ENCODE measurements at regions of chr1 and their contacts with region 1.

Region 1: DNA sequence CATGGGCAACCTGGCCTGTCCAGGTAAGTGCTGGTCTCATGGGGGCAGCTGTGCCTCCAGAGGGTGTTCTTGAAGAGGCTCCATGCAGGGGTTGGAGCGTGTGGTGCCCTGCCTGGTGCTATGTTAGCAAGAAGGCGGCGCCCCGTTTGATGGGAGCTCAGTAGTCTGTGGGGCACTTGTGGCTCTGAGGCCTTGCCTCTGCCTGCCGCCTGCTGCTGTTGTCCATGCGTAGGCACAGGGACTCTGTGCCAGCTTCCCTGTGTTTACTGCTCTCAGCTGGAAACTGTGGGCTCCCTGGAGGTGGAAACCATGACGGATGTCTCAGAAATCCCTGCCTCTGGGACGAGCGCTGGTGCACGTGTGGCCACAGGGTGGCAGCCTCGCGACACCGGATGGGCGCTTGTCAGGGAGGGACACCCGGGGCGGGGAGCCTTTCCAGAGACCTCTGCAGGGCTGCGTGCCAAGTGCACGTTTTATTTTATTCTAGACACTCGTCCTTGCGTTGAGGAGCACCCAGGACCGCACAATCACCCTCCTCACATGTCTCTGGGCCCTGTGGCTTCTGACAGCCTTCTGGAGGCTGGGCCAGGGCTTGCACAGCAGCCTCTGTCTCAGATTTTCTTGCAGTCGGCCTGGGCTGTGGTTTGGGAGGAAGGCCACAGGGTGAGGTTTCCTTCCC is 27.1 kb downstream of the SNAP47 start:
- DNase-seq: no peak
- H3K4me3 ChIP-seq: no peak overlapping the region
- CTCF ChIP-seq: peak; percentile 95

Region 2: GRCh38 chr1:227728059-227728891 is 34.1 kb before region 1 on chr1:
- CTCF ChIA-PET with region 1: interaction called, 27 read pairs
- POLR2A ChIA-PET with region 1: no interaction called
- DNase-seq: no peak
- H3K4me3 ChIP-seq: peak overlapping the region; percentile 58
- CTCF ChIP-seq: no peak

Region 3: GRCh38 chr1:227778401-227778947 is 16.1 kb after region 1 on chr1:
- CTCF ChIA-PET with region 1: interaction called, 70 read pairs
- POLR2A ChIA-PET with region 1: interaction called, 14 read pairs
- DNase-seq: no peak
- H3K4me3 ChIP-seq: no peak overlapping the region
- CTCF ChIP-seq: no peak

Region 4: DNA sequence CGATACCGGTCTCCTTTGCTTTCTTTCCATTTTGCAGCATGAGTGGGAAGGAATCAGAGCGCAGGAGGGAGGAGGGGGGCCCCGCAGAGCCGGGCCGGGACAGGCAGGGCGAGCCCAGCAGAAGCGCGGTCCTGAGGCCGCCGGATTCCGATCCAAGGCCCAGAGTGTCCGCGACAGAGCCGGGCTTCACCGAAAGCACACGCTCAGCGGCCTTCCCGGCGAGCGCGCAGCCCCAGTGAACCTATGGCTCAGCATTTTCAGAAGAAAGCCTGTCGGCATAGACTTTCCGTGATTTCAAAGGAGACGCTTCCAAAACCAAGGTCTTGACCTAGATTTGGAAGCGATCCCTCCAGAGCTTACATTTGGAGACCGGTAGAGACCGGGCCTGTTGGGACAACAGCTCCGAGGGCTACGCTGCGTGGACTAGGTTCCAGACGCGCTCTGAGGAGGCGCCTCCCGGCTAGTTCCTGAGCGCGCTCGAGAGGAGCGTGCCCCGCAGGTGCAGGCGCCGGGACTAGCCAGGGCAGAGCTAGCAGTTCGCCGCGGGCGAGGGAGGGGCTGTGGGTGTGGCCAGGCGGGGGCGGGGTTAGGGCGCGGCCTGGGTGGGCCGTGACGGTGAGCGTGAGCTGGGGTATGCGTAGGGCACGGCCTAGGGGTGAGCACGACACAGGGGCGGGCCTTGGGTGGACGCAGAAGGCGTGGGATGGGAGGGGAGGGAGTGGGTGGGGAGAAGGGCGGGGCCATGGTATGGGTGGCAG is 25.3 kb after region 1 on chr1:
- CTCF ChIA-PET with region 1: interaction called, 15 read pairs
- POLR2A ChIA-PET with region 1: interaction called, 9 read pairs
- DNase-seq: no peak
- H3K4me3 ChIP-seq: peak overlapping the region; percentile 80
- CTCF ChIP-seq: no peak